T-cell (primary cell): ENCODE measurements at regions of chrX and their contacts with region 1.

Region 1: GRCh38 chrX:70577442-70577841 is 132.8 kb downstream of the DLG3 start:
- DNase-seq: no peak
- ATAC-seq: no peak
- H3K4me3 ChIP-seq: no peak overlapping the region
- H3K4me3 Mint-ChIP-seq: no peak overlapping the region
- H3K27ac ChIP-seq: no peak overlapping the region
- H3K27ac Mint-ChIP-seq: no peak overlapping the region
- H3K4me1 ChIP-seq: no peaks in the 10 kb centered on the region
- H3K4me1 Mint-ChIP-seq: no peaks in the 10 kb centered on the region
- H3K27me3 ChIP-seq: no peaks in the 10 kb centered on the region
- H3K27me3 Mint-ChIP-seq: peaks cover 0 to 22% of the 10 kb centered on the region in 2 donors

Region 2: GRCh38 chrX:71910986-71911730 is 1333.7 kb after region 1 on chrX:
- CTCF ChIA-PET with region 1: interaction called in 1 of 2 experiments, 13 read pairs
- POLR2A ChIA-PET with region 1: no interaction called
- DNase-seq: peak in 28 of 35 experiments; percentile 1 to 47 (median 18)
- ATAC-seq: peak; percentile 63 to 90 (median 76)
- H3K4me3 ChIP-seq: peak overlapping the region; percentile 12 to 54
- H3K4me3 Mint-ChIP-seq: peak overlapping the region; percentile 25 to 59 (median 39)
- H3K27ac ChIP-seq: no peak overlapping the region
- H3K27ac Mint-ChIP-seq: no peak overlapping the region
- H3K4me1 ChIP-seq: peaks cover 0 to 16% of the 10 kb centered on the region in 2 experiments
- H3K4me1 Mint-ChIP-seq: peaks cover 0 to 4% (median 4%) of the 10 kb centered on the region in 3 donors
- H3K27me3 ChIP-seq: peaks cover 0 to 38% of the 10 kb centered on the region in 2 experiments
- H3K27me3 Mint-ChIP-seq: peaks cover 41 to 53% of the 10 kb centered on the region in 2 donors